WTC11 (cell line): ENCODE measurements at regions of chr2 and their contacts with region 1.

Region 1: DNA sequence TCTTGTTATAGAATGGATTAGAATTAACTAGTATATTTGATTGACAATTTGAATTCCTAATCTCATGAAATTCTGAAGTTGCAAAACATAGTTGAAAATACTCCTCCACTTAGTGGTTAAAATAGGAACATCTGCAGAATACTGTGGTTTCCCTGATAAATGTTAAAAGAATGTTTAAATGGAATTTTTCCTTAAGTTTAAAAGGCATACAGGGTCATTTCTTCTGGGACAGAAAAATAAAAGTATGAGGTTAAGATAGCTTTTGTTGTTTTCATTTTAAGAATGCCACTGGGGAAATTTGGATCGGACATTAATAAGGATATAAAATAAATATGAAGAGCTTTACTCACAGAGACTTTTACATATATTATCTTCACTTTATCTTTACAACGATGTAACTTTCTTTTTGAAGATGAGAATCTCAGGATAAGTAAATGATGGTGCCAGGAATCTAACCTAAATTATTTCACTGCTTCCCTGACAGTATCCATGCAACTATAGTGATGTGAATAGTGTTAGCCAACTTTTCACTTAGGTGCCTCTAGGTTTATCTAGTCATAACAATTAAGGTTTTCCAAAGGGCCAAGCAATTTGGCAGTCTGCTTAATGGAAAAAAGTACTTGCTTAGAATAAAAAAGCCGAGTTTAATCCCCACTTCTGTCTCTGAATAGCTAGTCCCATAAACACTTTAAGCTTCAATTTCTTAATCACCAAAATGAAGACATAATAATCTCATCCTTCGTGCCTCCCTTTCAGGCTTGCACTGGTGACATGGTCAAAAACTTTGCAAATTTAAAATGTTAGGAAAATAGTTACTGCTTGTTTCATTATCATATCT is 151.8 kb upstream of the STK17B start:
- DNase-seq: no peak
- ATAC-seq: no peak
- H3K4me3 Mint-ChIP-seq: no peak overlapping the region
- H3K27ac Mint-ChIP-seq: no peak overlapping the region
- H3K4me1 Mint-ChIP-seq: peaks cover 11% of the 10 kb centered on the region
- H3K27me3 Mint-ChIP-seq: no peaks in the 10 kb centered on the region
- CTCF ChIP-seq: no peak

Region 2: GRCh38 chr2:196233021-196233804 is 90.0 kb before region 1 on chr2:
- CTCF ChIA-PET with region 1: no interaction called
- POLR2A ChIA-PET with region 1: no interaction called
- DNase-seq: no peak
- ATAC-seq: no peak
- H3K4me3 Mint-ChIP-seq: no peak overlapping the region
- H3K27ac Mint-ChIP-seq: no peak overlapping the region
- H3K4me1 Mint-ChIP-seq: no peaks in the 10 kb centered on the region
- H3K27me3 Mint-ChIP-seq: no peaks in the 10 kb centered on the region
- CTCF ChIP-seq: no peak

Region 3: GRCh38 chr2:196277002-196277401 is 46.2 kb before region 1 on chr2:
- CTCF ChIA-PET with region 1: no interaction called
- POLR2A ChIA-PET with region 1: no interaction called
- DNase-seq: no peak
- ATAC-seq: no peak; the same call in 1 of the 2 replicates
- H3K4me3 Mint-ChIP-seq: no peak overlapping the region
- H3K27ac Mint-ChIP-seq: no peak overlapping the region
- H3K4me1 Mint-ChIP-seq: peaks cover 8% of the 10 kb centered on the region
- H3K27me3 Mint-ChIP-seq: no peaks in the 10 kb centered on the region
- CTCF ChIP-seq: no peak

Region 4: DNA sequence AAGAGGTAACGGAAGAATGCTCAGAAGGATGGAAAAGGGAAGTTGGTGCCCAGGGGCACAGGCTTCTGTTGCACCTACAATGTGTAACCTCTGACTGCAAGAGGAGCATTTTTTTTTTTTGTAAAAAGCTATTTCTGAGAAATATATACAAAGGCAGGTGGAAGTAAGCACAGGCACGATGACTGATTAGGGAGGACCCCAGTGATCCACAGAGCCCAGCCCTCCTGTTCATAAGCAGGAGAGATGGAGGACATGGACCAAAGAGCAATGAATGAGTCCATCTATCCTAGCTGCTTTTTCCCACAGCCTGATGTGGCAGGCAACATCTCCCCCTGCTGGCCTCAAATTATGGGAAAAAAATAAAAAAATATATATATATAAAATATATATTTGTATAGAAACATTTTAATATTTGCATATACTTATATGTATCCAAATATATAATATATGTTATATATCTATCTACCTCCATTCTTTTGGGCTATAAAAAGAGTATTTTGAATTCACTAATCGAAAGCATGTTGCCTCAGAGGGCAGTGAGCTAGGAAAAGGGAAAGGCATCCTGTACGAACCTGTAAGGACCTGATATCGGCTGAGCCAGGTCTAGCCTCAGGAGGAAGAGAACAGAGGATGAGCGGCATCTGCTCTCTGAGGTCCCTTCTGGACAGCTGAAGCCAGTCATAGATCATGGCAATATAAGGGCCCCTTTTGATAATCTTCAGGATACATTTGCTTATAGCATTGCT is 14.2 kb after region 1 on chr2:
- CTCF ChIA-PET with region 1: interaction called, 13 read pairs
- POLR2A ChIA-PET with region 1: no interaction called
- DNase-seq: no peak
- ATAC-seq: peak; percentile 73
- H3K4me3 Mint-ChIP-seq: no peak overlapping the region
- H3K27ac Mint-ChIP-seq: no peak overlapping the region
- H3K4me1 Mint-ChIP-seq: no peaks in the 10 kb centered on the region; the same call in 1 of the 2 replicates
- H3K27me3 Mint-ChIP-seq: no peaks in the 10 kb centered on the region
- CTCF ChIP-seq: peak; percentile 34; the same call in 1 of the 2 replicates